ENCODE measurements at regions of chr20 and their contacts with region 1.

Region 1: GRCh38 chr20:33992923-33993575 is 662 bp upstream of the RALY start:
- H3K4me3 ChIP-seq: peak overlapping the region; percentile 59
- H3K27ac ChIP-seq: peak overlapping the region; percentile 97
- H3K4me1 ChIP-seq: peaks cover 6% of the 10 kb centered on the region; the same call in 1 of the 2 replicates
- CTCF ChIP-seq: no peak

Region 2: GRCh38 chr20:33810885-33811777 is 181.9 kb before region 1 on chr20 and contains the start of gene CHMP4B:
- CTCF ChIA-PET with region 1: no interaction called
- POLR2A ChIA-PET with region 1: interaction called, 13 read pairs
- H3K4me3 ChIP-seq: peak within 1 kb of the TSS; percentile 56
- H3K27ac ChIP-seq: peak within 1 kb of the TSS; percentile 87
- H3K4me1 ChIP-seq: no peaks in the 10 kb centered on the region
- CTCF ChIP-seq: no peak

Region 3: DNA sequence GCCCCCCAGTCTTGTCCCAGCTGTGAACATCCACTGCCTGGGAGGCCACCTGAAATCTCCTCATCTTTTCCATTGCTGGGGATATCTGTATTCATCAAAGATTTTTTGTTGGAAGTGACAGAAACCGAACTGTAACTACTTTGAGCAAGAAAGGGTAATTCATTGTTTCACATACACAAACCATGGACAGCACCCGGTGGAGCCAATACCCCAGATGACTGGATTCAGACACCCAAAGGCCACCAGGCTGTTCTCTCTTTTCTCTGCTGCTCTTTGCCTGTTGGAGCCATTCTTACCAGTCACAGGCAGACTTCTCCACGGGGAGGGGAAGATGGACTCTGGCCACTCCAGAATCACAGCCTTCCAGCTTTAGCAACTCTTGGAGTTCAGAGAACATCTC is 11.1 kb before region 1 on chr20:
- CTCF ChIA-PET with region 1: no interaction called
- POLR2A ChIA-PET with region 1: interaction called, 14 read pairs
- H3K4me3 ChIP-seq: no peak overlapping the region
- H3K27ac ChIP-seq: no peak overlapping the region
- H3K4me1 ChIP-seq: no peaks in the 10 kb centered on the region
- CTCF ChIP-seq: no peak

Region 4: GRCh38 chr20:34111702-34112599 is 118.9 kb after region 1 on chr20 and contains the start of gene EIF2S2:
- CTCF ChIA-PET with region 1: no interaction called
- POLR2A ChIA-PET with region 1: interaction called, 25 read pairs
- H3K4me3 ChIP-seq: peak within 1 kb of the TSS; percentile 85
- H3K27ac ChIP-seq: peak within 1 kb of the TSS; percentile 81
- H3K4me1 ChIP-seq: peaks cover 3% of the 10 kb centered on the region; the same call in 1 of the 2 replicates
- CTCF ChIP-seq: peak; percentile 70; the same call in 1 of the 2 replicates